ENCODE measurements at regions of chr9 and their contacts with region 1.

Region 1: DNA sequence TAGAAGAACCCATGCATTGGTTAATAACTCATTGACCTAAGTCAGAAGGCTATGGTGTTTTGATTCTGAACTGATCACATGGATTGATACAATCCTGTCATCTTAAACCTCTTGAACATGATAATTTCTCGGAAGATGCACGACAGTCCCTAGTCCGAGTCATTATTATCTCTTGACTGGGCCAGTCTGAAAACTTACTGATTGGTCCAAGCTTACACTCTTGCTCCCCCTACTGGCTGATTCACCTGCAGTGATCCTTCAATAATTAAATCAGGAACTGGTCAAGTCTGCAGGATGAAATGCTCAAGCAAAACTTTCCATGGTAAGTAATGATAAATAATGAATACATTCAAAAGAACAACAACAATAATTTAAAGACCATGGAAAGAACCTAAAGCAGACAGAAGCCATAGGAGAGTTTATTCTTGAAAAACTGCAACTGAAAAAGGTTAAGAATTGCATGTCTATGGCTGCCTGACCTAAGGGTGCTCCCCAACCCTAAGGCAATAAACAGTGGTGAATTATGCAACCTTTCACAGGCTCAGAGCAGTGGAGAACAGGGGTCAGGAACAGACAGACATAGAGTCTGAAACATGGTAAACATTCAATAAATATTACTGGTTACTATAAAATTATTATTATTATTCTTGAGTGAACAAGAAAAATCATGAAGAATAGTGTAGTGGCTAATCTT is 79.3 kb downstream of the BRINP1 start:
- DNase-seq: peak in 4 of 5 donors; percentile 33 to 60 (median 52)
- ATAC-seq: peak in 3 of 4 donors; percentile 42 to 70 (median 54)
- H3K4me3 ChIP-seq: no peak overlapping the region
- H3K27ac ChIP-seq: no peak overlapping the region
- H3K4me1 ChIP-seq: no peaks in the 10 kb centered on the region
- H3K27me3 ChIP-seq: no peaks in the 10 kb centered on the region
- CTCF ChIP-seq: peak; percentile 67 to 89 (median 80)
- POLR2A ChIP-seq: no peak

Region 2: DNA sequence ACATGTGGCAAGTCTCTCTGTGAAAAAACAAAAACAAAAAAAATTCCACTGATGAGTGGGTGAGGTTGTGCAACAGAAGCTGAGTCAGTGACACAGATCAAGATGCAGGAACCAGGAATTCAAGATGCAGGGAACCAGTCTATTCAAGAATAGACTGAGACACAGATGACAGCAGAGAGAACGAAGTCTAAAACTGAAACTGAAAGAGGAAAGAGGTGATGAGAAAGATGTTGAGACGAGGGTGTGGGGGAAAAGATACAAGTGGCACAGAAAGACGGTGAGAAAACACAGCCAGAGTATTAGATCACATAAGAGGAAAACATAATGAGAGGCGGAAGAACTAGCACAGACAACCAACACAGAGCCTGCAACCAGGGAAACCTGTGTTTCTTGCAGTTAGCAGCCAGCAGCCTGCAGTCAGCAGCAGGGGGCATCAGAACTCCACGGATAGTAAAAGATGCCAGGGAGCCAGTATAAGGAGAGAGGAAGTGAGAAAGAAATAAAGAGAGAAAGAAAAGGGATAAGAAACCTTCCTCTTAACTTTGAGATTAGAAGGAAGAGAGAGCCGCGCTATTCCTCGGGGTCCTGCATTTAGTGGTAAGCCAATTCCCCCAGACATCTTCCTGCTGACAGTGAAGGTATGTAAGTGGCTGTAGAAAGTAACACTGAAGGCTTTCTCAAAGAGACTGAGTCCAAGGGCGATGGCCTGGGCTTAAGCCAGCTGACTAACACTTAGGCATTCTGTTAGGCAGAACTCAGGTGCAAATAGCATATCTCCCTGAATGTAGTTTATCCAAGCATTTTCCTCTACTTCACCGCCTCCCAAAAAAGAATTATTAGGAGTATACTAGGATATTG is 1506.7 kb before region 1 on chr9:
- intact Hi-C with region 1: loop called in 2 of 10 experiments (anchors 5 kb)
- DNase-seq: peak; percentile 61 to 71 (median 70)
- ATAC-seq: peak; percentile 80 to 96 (median 94)
- H3K4me3 ChIP-seq: peak overlapping the region in 10 of 12 donors; percentile 29 to 58 (median 49)
- H3K27ac ChIP-seq: peak overlapping the region in 8 of 12 donors; percentile 8 to 78 (median 44)
- H3K4me1 ChIP-seq: peaks cover 0 to 43% (median 12%) of the 10 kb centered on the region in 12 donors
- H3K27me3 ChIP-seq: no peaks in the 10 kb centered on the region
- CTCF ChIP-seq: peak; percentile 49 to 95 (median 80)
- POLR2A ChIP-seq: no peak

Region 3: DNA sequence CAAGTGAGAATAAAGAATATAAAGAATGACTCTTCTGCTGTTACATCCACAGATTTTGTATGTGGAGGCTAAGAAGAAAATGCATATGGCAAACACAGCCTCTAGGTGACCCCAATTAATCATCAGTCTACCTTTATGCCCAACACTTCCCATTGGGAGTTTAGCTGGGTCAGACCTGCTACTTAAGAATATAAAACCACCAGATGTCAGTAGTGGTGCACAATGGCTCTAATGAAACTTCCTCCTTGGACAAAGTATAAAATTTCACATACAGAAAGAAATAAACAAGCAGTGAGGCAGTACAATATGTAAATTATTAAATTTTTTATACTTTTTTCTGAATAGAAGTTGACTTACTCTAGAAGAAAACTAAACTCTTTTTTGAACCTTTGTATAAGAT is 460.6 kb before region 1 on chr9:
- intact Hi-C with region 1: loop called (anchors 1 to 10 kb)
- DNase-seq: no peak
- ATAC-seq: peak in 1 of 4 donors; percentile 36
- H3K4me3 ChIP-seq: no peak overlapping the region
- H3K27ac ChIP-seq: no peak overlapping the region
- H3K4me1 ChIP-seq: no peaks in the 10 kb centered on the region
- H3K27me3 ChIP-seq: no peaks in the 10 kb centered on the region
- CTCF ChIP-seq: peak; percentile 14 to 75 (median 52)
- POLR2A ChIP-seq: no peak

Region 4: DNA sequence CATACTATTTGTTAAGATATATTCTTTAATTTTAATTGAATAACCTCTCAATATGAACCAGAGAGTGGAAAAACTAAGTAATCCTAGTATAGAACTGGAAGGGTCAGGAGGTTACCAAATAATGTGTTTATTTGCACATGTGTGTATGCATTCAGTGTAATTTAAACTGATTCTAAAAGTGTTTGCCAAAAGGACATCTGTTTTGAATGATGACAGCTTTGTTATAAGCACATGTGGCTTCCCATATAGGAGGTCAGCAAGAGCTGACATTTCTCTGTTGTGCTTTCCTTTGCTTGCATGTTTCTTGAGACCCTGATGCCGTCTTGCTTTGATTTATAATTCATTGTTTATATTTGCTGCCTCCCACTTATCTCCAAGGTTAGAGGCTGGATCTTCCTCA is 304.0 kb before region 1 on chr9:
- intact Hi-C with region 1: loop called in 3 of 10 experiments (anchors 5 to 10 kb)
- DNase-seq: no peak
- ATAC-seq: no peak
- H3K4me3 ChIP-seq: no peak overlapping the region
- H3K27ac ChIP-seq: no peak overlapping the region
- H3K4me1 ChIP-seq: peaks cover 0 to 11% (median 0%) of the 10 kb centered on the region in 12 donors
- H3K27me3 ChIP-seq: no peaks in the 10 kb centered on the region
- CTCF ChIP-seq: no peak
- POLR2A ChIP-seq: no peak

Region 5: DNA sequence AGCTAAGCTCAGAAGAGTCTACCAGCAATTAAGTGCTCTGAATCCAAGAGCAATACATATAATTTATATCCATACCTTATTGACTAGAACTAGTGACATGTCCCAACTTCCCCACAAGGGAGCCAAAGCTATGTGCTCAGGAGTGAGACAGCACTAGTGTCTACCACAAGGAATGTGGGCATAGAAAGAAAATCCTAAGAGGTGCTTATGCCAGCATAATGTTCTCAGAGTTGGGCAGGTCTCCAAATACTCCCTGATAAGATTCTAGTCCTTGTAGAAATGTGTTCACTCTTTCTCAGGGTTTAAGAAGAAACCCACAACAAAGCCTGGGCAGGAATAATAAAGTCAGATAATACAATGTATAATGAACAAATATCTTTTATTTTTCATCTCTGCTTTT is 195.8 kb before region 1 on chr9:
- intact Hi-C with region 1: no loop called
- DNase-seq: no peak
- ATAC-seq: peak in 1 of 4 donors; percentile 22
- H3K4me3 ChIP-seq: no peak overlapping the region
- H3K27ac ChIP-seq: no peak overlapping the region
- H3K4me1 ChIP-seq: peaks cover 0 to 5% (median 0%) of the 10 kb centered on the region in 12 donors
- H3K27me3 ChIP-seq: no peaks in the 10 kb centered on the region
- CTCF ChIP-seq: no peak
- POLR2A ChIP-seq: no peak

Region 6: DNA sequence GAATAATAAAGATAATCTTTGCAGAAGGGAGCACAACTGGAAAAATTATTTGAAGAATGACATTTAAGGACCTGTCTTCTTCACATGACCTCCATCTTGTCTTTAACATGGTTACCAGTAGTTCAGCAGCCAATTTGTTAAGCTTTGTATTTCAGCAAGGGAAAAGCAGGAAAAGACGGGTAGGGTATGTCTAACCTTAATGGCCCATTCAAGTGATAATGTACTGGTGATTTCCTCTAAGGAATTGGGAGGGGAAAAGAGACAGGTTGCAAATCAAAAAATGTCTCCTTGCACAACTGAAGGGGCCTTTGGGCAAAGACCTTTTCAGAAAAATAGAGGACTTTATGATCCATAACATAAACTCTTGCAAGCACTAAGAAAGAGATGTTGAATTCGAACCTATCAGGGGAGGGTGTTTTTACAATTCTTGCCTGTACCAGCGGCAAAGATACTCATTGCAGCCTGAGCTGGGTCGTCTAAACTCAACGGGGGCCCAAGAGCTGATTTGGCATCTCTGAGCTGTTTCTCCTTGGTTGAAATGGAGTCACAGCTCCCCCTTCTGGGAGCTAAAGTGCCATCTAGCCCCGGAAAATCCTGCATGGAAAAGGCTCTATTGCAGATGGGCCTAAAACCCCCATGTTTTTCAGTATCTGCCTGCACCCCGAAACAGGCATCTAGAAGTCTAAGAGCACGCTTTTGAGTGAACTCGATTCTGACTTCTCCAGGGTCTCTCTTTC is 75.6 kb after region 1 on chr9:
- intact Hi-C with region 1: loop called in 1 of 10 experiments (anchors 10 kb)
- DNase-seq: no peak
- ATAC-seq: no peak
- H3K4me3 ChIP-seq: no peak overlapping the region
- H3K27ac ChIP-seq: no peak overlapping the region
- H3K4me1 ChIP-seq: peaks cover 0 to 13% (median 0%) of the 10 kb centered on the region in 12 donors
- H3K27me3 ChIP-seq: peaks cover 0 to 34% (median 29%) of the 10 kb centered on the region in 9 donors
- CTCF ChIP-seq: peak in 11 of 12 donors; percentile 22 to 64 (median 48)
- POLR2A ChIP-seq: no peak